Heart left ventricle (tissue), 16 donors: ENCODE measurements at regions of chr14 and their contacts with region 1.

Region 1: GRCh38 chr14:51780006-51780692 is 80.3 kb upstream of the GNG2 start:
- DNase-seq: peak; percentile 54 to 73 (median 68)
- ATAC-seq: peak; percentile 23 to 74 (median 72)
- H3K4me3 ChIP-seq: no peak overlapping the region
- H3K27ac ChIP-seq: no peak overlapping the region
- H3K4me1 ChIP-seq: peaks cover 0 to 22% (median 5%) of the 10 kb centered on the region in 12 donors
- H3K27me3 ChIP-seq: peaks cover 0 to 5% (median 0%) of the 10 kb centered on the region in 9 donors
- CTCF ChIP-seq: peak; percentile 73 to 91 (median 84)
- POLR2A ChIP-seq: no peak

Region 2: DNA sequence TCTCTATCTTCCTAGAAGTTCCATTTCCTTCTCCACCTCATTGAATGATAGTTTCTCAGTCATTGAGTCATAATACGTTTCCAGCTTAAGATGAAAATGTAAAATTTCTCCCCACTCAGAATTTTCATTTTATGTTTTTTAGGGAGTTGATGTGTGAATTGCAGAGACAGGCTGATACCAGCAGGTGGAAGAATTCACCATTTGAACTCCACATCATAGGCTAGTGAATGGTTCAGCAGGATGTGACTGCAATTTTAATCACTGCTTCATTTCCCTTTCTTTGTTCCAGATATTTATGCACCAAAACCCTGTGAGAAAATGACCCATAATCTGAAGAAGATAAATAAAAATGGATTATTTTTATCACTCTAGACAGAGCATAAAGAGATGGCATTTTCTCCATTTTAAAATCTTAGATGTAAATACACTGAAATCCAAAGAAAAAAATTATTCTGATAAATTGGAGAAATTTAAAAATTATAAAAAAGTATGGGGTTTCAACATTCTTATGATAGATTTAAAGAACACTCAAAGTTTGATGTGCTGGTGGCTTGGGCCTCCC is 825.3 kb before region 1 on chr14:
- intact Hi-C with region 1: loop called in 4 of 10 experiments (anchors 5 to 10 kb)
- DNase-seq: no peak
- ATAC-seq: peak in 3 of 4 donors; percentile 75 to 83 (median 77)
- H3K4me3 ChIP-seq: no peak overlapping the region
- H3K27ac ChIP-seq: peak overlapping the region in 3 of 12 donors; percentile 11 to 61 (median 58)
- H3K4me1 ChIP-seq: peaks cover 0 to 11% (median 1%) of the 10 kb centered on the region in 12 donors
- H3K27me3 ChIP-seq: no peaks in the 10 kb centered on the region
- CTCF ChIP-seq: peak; percentile 30 to 74 (median 61)
- POLR2A ChIP-seq: no peak

Region 3: DNA sequence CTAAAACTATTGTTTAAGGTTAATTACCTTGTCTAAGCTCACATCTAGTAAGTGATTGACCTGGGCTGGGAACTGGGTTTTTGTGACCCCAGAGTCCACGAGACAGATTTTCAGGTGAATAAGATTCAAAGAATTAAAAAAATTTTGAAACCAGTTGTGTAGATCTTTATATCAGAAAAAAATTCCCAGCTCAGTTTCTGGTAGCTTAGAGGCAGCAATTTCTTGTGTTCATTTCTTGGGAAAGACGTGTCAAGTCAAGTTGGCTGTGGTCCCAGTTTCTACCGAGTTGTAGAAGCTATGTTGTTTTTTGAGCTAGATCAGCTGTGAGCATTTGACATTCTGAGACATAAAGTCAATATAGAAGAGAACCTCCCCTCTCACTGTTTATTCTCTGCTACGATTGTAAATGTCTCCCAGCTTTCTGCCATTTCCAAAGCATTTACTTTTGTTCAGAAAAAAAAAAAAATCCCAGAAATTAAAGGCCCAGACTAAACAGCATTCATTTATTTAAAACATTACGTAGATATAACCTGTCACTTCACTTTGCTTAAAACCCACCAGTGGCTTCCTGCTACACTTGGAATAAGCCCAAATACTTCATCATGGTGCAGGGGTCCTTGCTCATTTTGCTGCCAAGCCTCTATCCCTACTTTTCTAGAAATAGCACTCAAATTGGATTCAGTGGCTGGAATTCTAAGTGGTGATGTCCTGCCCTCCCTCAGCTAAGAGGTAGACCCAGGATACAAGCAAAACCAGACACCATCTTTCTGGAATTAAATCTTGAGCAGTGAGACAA is 815.4 kb before region 1 on chr14:
- intact Hi-C with region 1: loop called in 4 of 10 experiments (anchors 5 to 10 kb)
- DNase-seq: peak in 3 of 5 donors; percentile 42 to 60 (median 44)
- ATAC-seq: no peak
- H3K4me3 ChIP-seq: no peak overlapping the region
- H3K27ac ChIP-seq: peak overlapping the region in 1 of 12 donors; percentile 48
- H3K4me1 ChIP-seq: peaks cover 0 to 35% (median 0%) of the 10 kb centered on the region in 12 donors
- H3K27me3 ChIP-seq: no peaks in the 10 kb centered on the region
- CTCF ChIP-seq: no peak
- POLR2A ChIP-seq: no peak

Region 4: DNA sequence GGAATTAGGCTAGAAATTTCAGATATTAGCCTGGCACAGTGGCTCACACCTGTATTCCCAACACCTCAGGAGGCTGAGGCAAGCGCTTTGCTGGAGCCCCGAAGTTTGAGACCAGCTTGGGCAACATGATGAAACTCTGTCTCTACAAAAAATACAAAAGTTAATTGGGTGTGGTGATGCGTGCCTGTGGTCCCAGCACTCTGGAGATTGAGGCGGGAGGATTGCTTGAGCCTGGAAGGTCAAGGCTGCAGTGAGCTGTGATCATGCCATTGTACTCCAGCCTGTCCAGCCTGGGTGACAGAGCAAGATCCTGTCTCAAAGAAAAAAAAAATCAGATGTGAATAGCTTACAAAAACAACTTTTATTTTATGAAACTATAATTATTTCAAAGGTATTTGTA is 113.3 kb before region 1 on chr14:
- intact Hi-C with region 1: loop called in 1 of 10 experiments (anchors 10 kb)
- DNase-seq: no peak
- ATAC-seq: no peak
- H3K4me3 ChIP-seq: no peak overlapping the region
- H3K27ac ChIP-seq: no peak overlapping the region
- H3K4me1 ChIP-seq: peaks cover 0 to 7% (median 0%) of the 10 kb centered on the region in 12 donors
- H3K27me3 ChIP-seq: no peaks in the 10 kb centered on the region
- CTCF ChIP-seq: no peak
- POLR2A ChIP-seq: no peak

Region 5: GRCh38 chr14:51979088-51979709 is 199.1 kb after region 1 on chr14:
- intact Hi-C with region 1: loop called in 7 of 10 experiments (anchors 5 to 10 kb)
- DNase-seq: peak; percentile 74 to 86 (median 82)
- ATAC-seq: peak; percentile 60 to 83 (median 80)
- H3K4me3 ChIP-seq: no peak overlapping the region
- H3K27ac ChIP-seq: peak overlapping the region in 6 of 12 donors; percentile 5 to 46 (median 22)
- H3K4me1 ChIP-seq: peaks cover 0 to 15% (median 0%) of the 10 kb centered on the region in 12 donors
- H3K27me3 ChIP-seq: no peaks in the 10 kb centered on the region
- CTCF ChIP-seq: peak; percentile 85 to 98 (median 94)
- POLR2A ChIP-seq: no peak

Region 6: GRCh38 chr14:52131640-52132320 is 351.6 kb after region 1 on chr14:
- intact Hi-C with region 1: loop called in 2 of 10 experiments (anchors 5 to 10 kb)
- DNase-seq: peak; percentile 63 to 93 (median 83)
- ATAC-seq: peak; percentile 83 to 95 (median 93)
- H3K4me3 ChIP-seq: peak overlapping the region in 2 of 12 donors; percentile 5 to 13
- H3K27ac ChIP-seq: peak overlapping the region in 3 of 12 donors; percentile 23 to 48 (median 47)
- H3K4me1 ChIP-seq: peaks cover 0 to 13% (median 8%) of the 10 kb centered on the region in 12 donors
- H3K27me3 ChIP-seq: no peaks in the 10 kb centered on the region
- CTCF ChIP-seq: peak; percentile 58 to 87 (median 83)
- POLR2A ChIP-seq: no peak